PC-9 (cell line): ENCODE measurements at regions of chr2 and their contacts with region 1.

Region 1: GRCh38 chr2:64330281-64331113 is 123.5 kb upstream of the LGALSL start:
- DNase-seq: peak; percentile 76 to 77
- H3K4me3 ChIP-seq: peak overlapping the region; percentile 44; the same call in 1 of the 2 replicates
- H3K27ac ChIP-seq: no peak overlapping the region; the same call in 1 of the 2 replicates
- H3K4me1 ChIP-seq: peaks cover 22% of the 10 kb centered on the region
- H3K27me3 ChIP-seq: no peaks in the 10 kb centered on the region
- CTCF ChIP-seq: peak; percentile 97

Region 2: GRCh38 chr2:63788071-63788470 is 542.4 kb before region 1 on chr2:
- CTCF ChIA-PET with region 1: no interaction called
- POLR2A ChIA-PET with region 1: no interaction called
- intact Hi-C with region 1: no loop called
- DNase-seq: no peak
- H3K4me3 ChIP-seq: no peak overlapping the region
- H3K27ac ChIP-seq: no peak overlapping the region
- H3K4me1 ChIP-seq: no peaks in the 10 kb centered on the region
- H3K27me3 ChIP-seq: no peaks in the 10 kb centered on the region
- CTCF ChIP-seq: no peak

Region 3: GRCh38 chr2:64144057-64145013 is 186.2 kb before region 1 on chr2 and contains the start of gene PELI1:
- CTCF ChIA-PET with region 1: no interaction called
- POLR2A ChIA-PET with region 1: no interaction called
- intact Hi-C with region 1: loop called (anchors 5 kb)
- DNase-seq: peak; percentile 98 to 99
- H3K4me3 ChIP-seq: peak within 1 kb of the TSS; percentile 80
- H3K27ac ChIP-seq: no peak within 1 kb of the TSS
- H3K4me1 ChIP-seq: peaks cover 36% of the 10 kb centered on the region
- H3K27me3 ChIP-seq: no peaks in the 10 kb centered on the region
- CTCF ChIP-seq: peak; percentile 40; the same call in 1 of the 2 replicates
- total RNA-seq, gene PELI1: 32.6 and 33.1 TPM in 2 replicates

Region 4: DNA sequence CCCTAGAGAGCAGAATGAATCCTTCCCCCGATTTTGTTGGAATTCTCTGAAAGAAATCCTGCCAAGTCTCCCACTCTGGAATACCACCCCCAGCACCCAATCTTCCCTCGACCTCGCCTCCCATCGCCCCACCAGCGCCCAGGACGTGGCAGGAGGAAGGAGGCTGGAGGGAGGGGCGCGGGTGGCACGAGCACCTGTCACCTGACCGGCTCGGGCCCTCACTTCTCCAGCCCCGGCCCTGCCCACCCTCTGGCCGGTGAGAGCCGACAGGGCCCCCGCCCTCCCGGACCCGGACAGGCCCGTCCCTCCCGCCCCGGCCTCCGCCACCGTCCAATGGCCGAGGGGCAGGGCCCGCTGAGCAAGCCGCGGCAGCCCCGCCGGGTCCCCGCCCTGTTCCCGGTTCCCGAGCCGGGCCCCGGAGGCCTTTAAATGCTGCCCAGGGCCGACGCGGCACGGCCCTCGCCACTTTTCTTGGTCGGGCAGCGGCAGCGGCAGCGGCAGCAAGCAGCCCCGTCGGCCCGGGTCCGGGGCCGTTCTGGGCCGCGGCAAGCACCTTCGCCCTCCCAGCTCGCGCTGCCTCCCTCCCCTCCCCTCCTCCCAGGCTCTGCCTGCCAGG is 123.4 kb after region 1 on chr2 and contains the start of gene LGALSL:
- CTCF ChIA-PET with region 1: no interaction called
- POLR2A ChIA-PET with region 1: interaction called, 6 read pairs
- intact Hi-C with region 1: loop called (anchors 10 kb)
- DNase-seq: peak; percentile 71 to 88
- H3K4me3 ChIP-seq: peak within 1 kb of the TSS; percentile 65
- H3K27ac ChIP-seq: peak within 1 kb of the TSS; percentile 99
- H3K4me1 ChIP-seq: peaks cover 22% of the 10 kb centered on the region
- H3K27me3 ChIP-seq: no peaks in the 10 kb centered on the region
- CTCF ChIP-seq: no peak
- total RNA-seq, gene LGALSL: 9.7 and 13.0 TPM in 2 replicates

Region 5: GRCh38 chr2:64873472-64873924 is 543.0 kb after region 1 on chr2:
- CTCF ChIA-PET with region 1: no interaction called
- POLR2A ChIA-PET with region 1: no interaction called
- intact Hi-C with region 1: loop called (anchors 2 kb)
- DNase-seq: peak; percentile 66 to 88
- H3K4me3 ChIP-seq: no peak overlapping the region
- H3K27ac ChIP-seq: no peak overlapping the region
- H3K4me1 ChIP-seq: peaks cover 26% of the 10 kb centered on the region
- H3K27me3 ChIP-seq: no peaks in the 10 kb centered on the region
- CTCF ChIP-seq: peak; percentile 99

Region 6: GRCh38 chr2:64978514-64979268 is 648.2 kb after region 1 on chr2:
- CTCF ChIA-PET with region 1: no interaction called
- POLR2A ChIA-PET with region 1: interaction called, 10 read pairs
- intact Hi-C with region 1: no loop called
- DNase-seq: no peak
- H3K4me3 ChIP-seq: no peak overlapping the region
- H3K27ac ChIP-seq: no peak overlapping the region
- H3K4me1 ChIP-seq: peaks cover 16% of the 10 kb centered on the region
- H3K27me3 ChIP-seq: no peaks in the 10 kb centered on the region
- CTCF ChIP-seq: no peak